ENCODE measurements at regions of chr1 and their contacts with region 1.

Region 1: GRCh38 chr1:202009326-202010179 is 834 bp upstream of the ELF3 start:
- DNase-seq: peak; percentile 75 to 81
- H3K4me3 ChIP-seq: peak overlapping the region; percentile 52
- H3K27ac ChIP-seq: peak overlapping the region; percentile 97
- H3K4me1 ChIP-seq: peaks cover 68% of the 10 kb centered on the region
- H3K27me3 ChIP-seq: no peaks in the 10 kb centered on the region
- CTCF ChIP-seq: peak; percentile 96

Region 2: GRCh38 chr1:201982623-201983379 is 26.8 kb before region 1 on chr1 and contains the start of gene RNPEP:
- CTCF ChIA-PET with region 1: interaction called, 4 read pairs
- POLR2A ChIA-PET with region 1: interaction called, 15 read pairs
- intact Hi-C with region 1: loop called (anchors 2 kb)
- DNase-seq: peak; percentile 73 to 76
- H3K4me3 ChIP-seq: peak within 1 kb of the TSS; percentile 72
- H3K27ac ChIP-seq: peak within 1 kb of the TSS; percentile 16
- H3K4me1 ChIP-seq: peaks cover 14% of the 10 kb centered on the region
- H3K27me3 ChIP-seq: no peaks in the 10 kb centered on the region
- CTCF ChIP-seq: no peak; the same call in 1 of the 2 replicates
- total RNA-seq, gene RNPEP: 108 and 123 TPM in 2 replicates

Region 3: GRCh38 chr1:202034683-202035462 is 25.3 kb after region 1 on chr1:
- CTCF ChIA-PET with region 1: interaction called, 4 read pairs
- POLR2A ChIA-PET with region 1: interaction called, 60 read pairs
- intact Hi-C with region 1: loop called (anchors 1 kb)
- DNase-seq: peak; percentile 98
- H3K4me3 ChIP-seq: peak overlapping the region; percentile 26; the same call in 1 of the 2 replicates
- H3K27ac ChIP-seq: peak overlapping the region; percentile 89
- H3K4me1 ChIP-seq: peaks cover 68% of the 10 kb centered on the region
- H3K27me3 ChIP-seq: no peaks in the 10 kb centered on the region
- CTCF ChIP-seq: no peak

Region 4: GRCh38 chr1:202056644-202057461 is 47.3 kb after region 1 on chr1:
- CTCF ChIA-PET with region 1: interaction called, 9 read pairs
- POLR2A ChIA-PET with region 1: interaction called, 40 read pairs
- intact Hi-C with region 1: loop called (anchors 1 kb)
- DNase-seq: peak; percentile 97 to 98
- H3K4me3 ChIP-seq: no peak overlapping the region
- H3K27ac ChIP-seq: peak overlapping the region; percentile 98
- H3K4me1 ChIP-seq: peaks cover 64% of the 10 kb centered on the region
- H3K27me3 ChIP-seq: no peaks in the 10 kb centered on the region
- CTCF ChIP-seq: no peak

Region 5: DNA sequence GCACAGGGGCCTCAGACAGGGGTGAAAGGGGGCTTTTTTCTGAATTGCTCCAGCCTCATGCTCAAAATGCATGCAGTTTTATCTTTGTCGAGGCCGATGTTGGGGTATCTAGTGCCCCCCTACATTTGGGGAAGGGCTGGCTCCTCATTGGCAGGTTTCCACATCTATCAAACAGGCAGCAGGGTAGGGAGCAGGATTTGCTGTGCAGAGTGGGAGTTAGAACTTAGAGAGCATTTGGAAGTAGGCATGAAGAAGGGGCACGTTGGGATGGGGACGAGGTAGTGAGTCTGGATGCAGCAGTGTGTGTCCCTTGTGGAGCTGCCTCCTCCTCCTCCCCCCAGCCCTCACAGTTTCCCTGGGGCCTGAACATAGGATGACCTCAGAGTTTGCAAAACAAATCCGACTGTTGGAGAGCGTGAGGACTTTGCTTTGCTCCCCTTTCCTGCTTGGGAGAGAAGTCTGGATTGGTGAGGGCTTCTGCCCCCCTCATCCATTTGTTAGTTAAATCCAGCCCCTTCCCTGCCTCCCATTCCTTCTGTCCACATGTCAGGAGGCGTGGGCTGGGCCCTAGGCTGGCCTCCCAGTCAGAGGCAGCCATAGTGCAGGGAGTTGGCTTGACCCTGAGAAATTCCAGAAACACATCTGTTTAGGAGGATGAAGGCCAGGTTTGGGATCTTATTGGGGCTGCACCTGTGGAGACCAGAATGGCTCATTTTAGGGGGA is 76.3 kb after region 1 on chr1:
- CTCF ChIA-PET with region 1: interaction called, 3 read pairs
- POLR2A ChIA-PET with region 1: interaction called, 6 read pairs
- intact Hi-C with region 1: loop called (anchors 2 kb)
- DNase-seq: peak; percentile 41 to 53
- H3K4me3 ChIP-seq: no peak overlapping the region
- H3K27ac ChIP-seq: peak overlapping the region; percentile 44
- H3K4me1 ChIP-seq: peaks cover 47% of the 10 kb centered on the region
- H3K27me3 ChIP-seq: no peaks in the 10 kb centered on the region
- CTCF ChIP-seq: no peak

Region 6: GRCh38 chr1:202112839-202113672 is 103.5 kb after region 1 on chr1:
- CTCF ChIA-PET with region 1: interaction called, 8 read pairs
- POLR2A ChIA-PET with region 1: interaction called, 90 read pairs
- intact Hi-C with region 1: loop called (anchors 1 kb)
- DNase-seq: peak; percentile 67 to 86
- H3K4me3 ChIP-seq: peak overlapping the region; percentile 23; the same call in 1 of the 2 replicates
- H3K27ac ChIP-seq: peak overlapping the region; percentile 97
- H3K4me1 ChIP-seq: peaks cover 92% of the 10 kb centered on the region
- H3K27me3 ChIP-seq: no peaks in the 10 kb centered on the region
- CTCF ChIP-seq: no peak

Region 7: GRCh38 chr1:202235856-202236837 is 226.6 kb after region 1 on chr1:
- CTCF ChIA-PET with region 1: no interaction called
- POLR2A ChIA-PET with region 1: no interaction called
- intact Hi-C with region 1: no loop called
- DNase-seq: peak; percentile 92 to 96
- H3K4me3 ChIP-seq: peak overlapping the region; percentile 44; the same call in 1 of the 2 replicates
- H3K27ac ChIP-seq: peak overlapping the region; percentile 80
- H3K4me1 ChIP-seq: peaks cover 25% of the 10 kb centered on the region
- H3K27me3 ChIP-seq: no peaks in the 10 kb centered on the region
- CTCF ChIP-seq: peak; percentile 97

Measured in PC-9 (cell line).